ENCODE measurements at regions of chr2 and their contacts with region 1.

Region 1: GRCh38 chr2:222860740-222861410 is at the start of gene ACSL3:
- DNase-seq: peak; percentile 99
- H3K4me3 ChIP-seq: peak within 1 kb of the TSS; percentile 92
- H3K27ac ChIP-seq: peak within 1 kb of the TSS; percentile 93
- H3K4me1 ChIP-seq: peaks cover 5% of the 10 kb centered on the region
- H3K27me3 ChIP-seq: no peaks in the 10 kb centered on the region
- CTCF ChIP-seq: no peak
- total RNA-seq, gene ACSL3: 116 to 162 TPM

Region 2: GRCh38 chr2:222797261-222797660 is 63.6 kb before region 1 on chr2:
- intact Hi-C with region 1: loop called (anchors 5 kb)
- DNase-seq: no peak
- H3K4me3 ChIP-seq: no peak overlapping the region
- H3K27ac ChIP-seq: peak overlapping the region; percentile 74
- H3K4me1 ChIP-seq: peaks cover 12% of the 10 kb centered on the region
- H3K27me3 ChIP-seq: no peaks in the 10 kb centered on the region
- CTCF ChIP-seq: no peak

Measured in colonic mucosa (tissue), 4 donors.